Endothelial cell of umbilical vein (primary cell): ENCODE measurements at regions of chr7 and their contacts with region 1.

Region 1: DNA sequence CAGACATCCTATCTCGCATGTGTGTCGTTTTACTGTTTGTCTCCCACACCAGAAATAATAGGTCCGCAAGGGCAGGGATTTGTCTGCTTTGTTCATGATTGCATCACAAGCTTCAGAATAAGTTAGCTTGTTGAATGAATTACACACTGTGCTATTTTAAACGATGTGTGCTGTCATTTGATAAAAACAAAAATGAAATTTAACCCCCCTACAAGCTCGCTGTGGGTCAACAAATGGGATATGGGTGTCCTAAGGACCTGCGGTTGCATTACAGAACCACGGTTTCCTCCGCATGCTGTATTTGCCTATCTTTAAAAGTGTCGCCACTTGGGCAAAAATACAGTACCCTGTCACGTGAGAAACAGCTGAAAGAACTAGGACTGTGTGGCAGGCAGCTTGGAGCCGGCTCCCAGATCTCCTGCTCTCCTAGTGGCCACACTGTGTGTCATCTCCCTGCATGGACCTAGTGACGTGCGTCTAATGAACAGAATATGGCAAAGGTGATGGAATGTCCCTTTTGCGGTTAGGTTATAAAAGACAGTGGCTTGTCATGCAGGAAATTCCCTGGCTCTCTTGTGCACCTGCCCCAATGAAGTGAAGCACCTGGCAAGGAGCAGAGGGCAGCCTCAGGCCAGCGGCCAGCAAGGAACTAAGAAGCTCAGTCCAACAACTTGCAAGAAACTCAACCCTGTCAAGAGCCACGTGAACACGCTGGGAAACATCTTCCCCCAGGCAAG is 32.9 kb upstream of the CRYGN start:
- DNase-seq: peak; percentile 86
- H3K4me3 ChIP-seq: no peak overlapping the region
- H3K27ac ChIP-seq: peak overlapping the region; percentile 69
- H3K4me1 ChIP-seq: peaks cover 17% of the 10 kb centered on the region
- H3K27me3 ChIP-seq: no peaks in the 10 kb centered on the region
- CTCF ChIP-seq: no peak
- POLR2A ChIP-seq: no peak

Region 2: GRCh38 chr7:151432791-151433521 is 39.9 kb before region 1 on chr7:
- CTCF ChIA-PET with region 1: no interaction called
- POLR2A ChIA-PET with region 1: no interaction called
- dilution Hi-C with region 1: no loop called
- intact Hi-C with region 1: no loop called
- DNase-seq: no peak
- H3K4me3 ChIP-seq: no peak overlapping the region
- H3K27ac ChIP-seq: no peak overlapping the region
- H3K4me1 ChIP-seq: no peaks in the 10 kb centered on the region
- H3K27me3 ChIP-seq: no peaks in the 10 kb centered on the region
- CTCF ChIP-seq: no peak
- POLR2A ChIP-seq: no peak

Region 3: GRCh38 chr7:151459726-151460473 is 12.9 kb before region 1 on chr7:
- CTCF ChIA-PET with region 1: interaction called, 6 read pairs
- POLR2A ChIA-PET with region 1: no interaction called
- dilution Hi-C with region 1: no loop called
- intact Hi-C with region 1: loop called (anchors 1 kb)
- DNase-seq: peak; percentile 86
- H3K4me3 ChIP-seq: peak overlapping the region in 1 of 3 experiments; percentile 17
- H3K27ac ChIP-seq: peak overlapping the region; percentile 34
- H3K4me1 ChIP-seq: peaks cover 22% of the 10 kb centered on the region
- H3K27me3 ChIP-seq: no peaks in the 10 kb centered on the region
- CTCF ChIP-seq: peak in 1 of 2 donors; percentile 17
- POLR2A ChIP-seq: no peak

Region 4: GRCh38 chr7:151484971-151485707 is 12.3 kb after region 1 on chr7:
- CTCF ChIA-PET with region 1: interaction called, 6 read pairs
- POLR2A ChIA-PET with region 1: no interaction called
- dilution Hi-C with region 1: no loop called
- intact Hi-C with region 1: loop called (anchors 1 kb)
- DNase-seq: peak; percentile 81
- H3K4me3 ChIP-seq: no peak overlapping the region
- H3K27ac ChIP-seq: peak overlapping the region; percentile 45
- H3K4me1 ChIP-seq: peaks cover 21% of the 10 kb centered on the region
- H3K27me3 ChIP-seq: no peaks in the 10 kb centered on the region
- CTCF ChIP-seq: no peak
- POLR2A ChIP-seq: no peak

Region 5: GRCh38 chr7:151759591-151760042 is 286.8 kb after region 1 on chr7:
- CTCF ChIA-PET with region 1: no interaction called
- POLR2A ChIA-PET with region 1: no interaction called
- dilution Hi-C with region 1: no loop called
- intact Hi-C with region 1: no loop called
- DNase-seq: peak; percentile 60
- H3K4me3 ChIP-seq: no peak overlapping the region
- H3K27ac ChIP-seq: no peak overlapping the region
- H3K4me1 ChIP-seq: peaks cover 17% of the 10 kb centered on the region
- H3K27me3 ChIP-seq: peaks cover 0 to 1% of the 10 kb centered on the region in 2 experiments
- CTCF ChIP-seq: peak; percentile 80 to 86
- POLR2A ChIP-seq: no peak